AG04450 (cell line): ENCODE measurements at regions of chr2 and their contacts with region 1.

Region 1: GRCh38 chr2:100262555-100263320 is 59.6 kb downstream of the LONRF2 start:
- DNase-seq: no peak
- H3K4me3 ChIP-seq: no peak overlapping the region
- H3K27ac ChIP-seq: no peak overlapping the region
- H3K27me3 ChIP-seq: no peaks in the 10 kb centered on the region
- CTCF ChIP-seq: peak; percentile 99

Region 2: GRCh38 chr2:99524056-99524455 is 738.7 kb before region 1 on chr2:
- CTCF ChIA-PET with region 1: interaction called, 12 read pairs
- POLR2A ChIA-PET with region 1: no interaction called
- DNase-seq: no peak
- H3K4me3 ChIP-seq: no peak overlapping the region
- H3K27ac ChIP-seq: no peak overlapping the region
- H3K27me3 ChIP-seq: peaks cover 13% of the 10 kb centered on the region
- CTCF ChIP-seq: no peak

Region 3: DNA sequence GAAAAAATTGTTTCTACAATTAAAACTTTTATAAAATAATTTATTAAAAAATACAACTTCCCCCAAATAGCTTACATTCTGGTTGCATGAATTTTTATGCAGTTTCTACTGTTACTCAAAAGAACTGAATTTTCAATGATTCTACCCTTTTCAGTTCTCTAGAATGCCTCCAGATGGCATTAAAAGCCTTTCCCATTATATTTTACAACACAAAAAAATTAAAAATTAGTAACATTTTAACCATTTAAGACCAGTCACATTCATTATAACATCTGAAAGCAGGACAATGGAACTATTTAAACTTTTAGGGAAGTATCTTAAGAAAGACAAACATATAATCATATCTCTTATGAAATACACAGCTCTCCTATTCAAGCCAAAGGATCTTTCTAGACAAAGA is 536.9 kb before region 1 on chr2:
- CTCF ChIA-PET with region 1: interaction called, 62 read pairs
- POLR2A ChIA-PET with region 1: no interaction called
- DNase-seq: no peak
- H3K4me3 ChIP-seq: no peak overlapping the region
- H3K27ac ChIP-seq: no peak overlapping the region
- H3K27me3 ChIP-seq: no peaks in the 10 kb centered on the region
- CTCF ChIP-seq: peak; percentile 60

Region 4: DNA sequence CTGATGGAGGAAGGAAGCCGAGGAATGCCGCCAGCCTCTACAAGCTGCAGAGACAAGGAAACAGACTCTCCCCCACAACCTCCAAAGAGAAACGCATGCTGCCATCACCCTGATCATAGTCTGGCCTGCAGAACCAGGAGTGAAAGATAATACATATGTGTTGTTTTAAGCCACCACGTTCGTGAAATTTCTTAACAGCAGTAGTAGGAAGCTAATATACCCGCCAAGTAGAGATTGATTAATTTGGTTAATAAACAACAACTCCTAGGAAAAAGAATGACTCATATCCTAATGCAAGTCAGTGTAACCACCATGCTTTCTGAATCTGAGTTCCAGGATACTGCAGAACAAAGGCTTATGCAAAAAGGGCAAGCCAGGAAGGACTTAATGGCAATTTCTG is 23.0 kb after region 1 on chr2:
- CTCF ChIA-PET with region 1: interaction called, 42 read pairs
- POLR2A ChIA-PET with region 1: no interaction called
- DNase-seq: peak; percentile 48
- H3K4me3 ChIP-seq: no peak overlapping the region
- H3K27ac ChIP-seq: peak overlapping the region; percentile 69
- H3K27me3 ChIP-seq: no peaks in the 10 kb centered on the region
- CTCF ChIP-seq: no peak

Region 5: DNA sequence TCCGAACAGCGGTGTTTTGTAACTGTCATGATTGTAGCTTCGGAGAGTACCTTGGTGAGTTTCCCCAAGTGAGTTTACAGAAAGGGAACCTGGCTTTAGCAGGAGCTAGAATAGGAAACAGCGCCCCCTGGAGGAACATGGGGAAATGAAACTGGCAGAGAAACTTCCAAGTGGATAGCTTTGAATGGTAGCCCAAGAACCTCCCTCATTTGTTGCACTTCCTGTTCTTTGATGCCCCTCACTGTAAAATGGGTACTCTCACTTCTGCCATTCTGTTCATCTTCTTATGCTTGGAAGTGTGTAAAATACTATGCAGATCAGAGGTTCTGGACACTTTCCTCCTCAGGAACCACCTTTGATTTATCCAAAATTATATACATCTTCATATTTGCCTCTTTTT is 118.5 kb after region 1 on chr2:
- CTCF ChIA-PET with region 1: interaction called, 474 read pairs
- POLR2A ChIA-PET with region 1: interaction called, 6 read pairs
- DNase-seq: peak; percentile 48
- H3K4me3 ChIP-seq: no peak overlapping the region
- H3K27ac ChIP-seq: no peak overlapping the region
- H3K27me3 ChIP-seq: peaks cover 17% of the 10 kb centered on the region
- CTCF ChIP-seq: peak; percentile 94